ENCODE measurements at regions of chr15 and their contacts with region 1.

Region 1: DNA sequence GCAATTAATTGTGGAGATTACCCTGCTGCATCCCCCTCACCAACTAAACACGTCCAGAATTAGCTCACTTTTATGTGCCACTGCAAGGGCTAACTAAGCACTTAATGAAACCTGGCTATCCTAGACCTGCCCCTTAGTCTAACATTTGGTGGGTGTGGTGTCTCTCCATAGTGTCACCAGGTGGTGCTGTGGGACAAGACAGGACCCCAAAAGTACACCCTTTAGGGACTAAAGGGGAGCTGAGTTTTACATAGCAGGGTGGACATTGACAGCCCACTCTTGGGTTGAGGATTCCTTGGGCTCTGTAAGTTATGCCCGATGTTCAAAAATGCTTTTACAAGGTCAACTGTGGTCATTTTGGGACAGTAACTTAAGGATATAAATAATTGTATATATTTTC is 5.7 kb downstream of the DUT start:
- DNase-seq: peak; percentile 21
- H3K4me3 Mint-ChIP-seq: no peak overlapping the region
- H3K27ac Mint-ChIP-seq: no peak overlapping the region
- H3K4me1 Mint-ChIP-seq: peaks cover 18% of the 10 kb centered on the region
- H3K27me3 Mint-ChIP-seq: no peaks in the 10 kb centered on the region
- CTCF ChIP-seq: no peak

Region 2: DNA sequence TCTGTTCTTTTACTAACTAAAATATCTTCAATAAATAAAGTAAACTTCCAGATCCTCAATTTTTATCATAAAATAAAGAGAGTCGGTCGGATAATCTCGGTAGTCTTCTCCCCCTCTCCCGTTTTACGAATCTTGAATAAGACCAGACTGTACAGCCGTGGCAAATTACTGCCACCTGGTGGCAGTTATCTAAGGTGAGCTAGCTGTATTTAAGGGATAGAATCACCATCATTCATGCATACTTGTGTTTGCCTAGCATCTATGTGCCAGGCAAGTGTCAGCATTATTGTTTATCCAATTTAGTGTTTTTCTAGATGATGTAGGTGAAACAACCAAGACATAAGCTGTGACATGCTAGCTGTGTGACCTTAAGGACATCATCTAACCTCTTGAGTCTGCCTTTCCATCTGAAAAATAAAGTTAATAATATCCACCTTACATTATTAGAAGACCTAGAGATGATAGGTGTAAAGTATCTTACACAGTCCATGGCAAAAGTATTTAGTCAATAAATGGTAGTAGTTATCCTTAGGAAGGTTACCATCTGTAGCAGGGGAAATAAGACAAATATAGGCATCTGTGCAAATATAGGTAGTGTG is 15.6 kb after region 1 on chr15:
- CTCF ChIA-PET with region 1: interaction called, 27 read pairs
- POLR2A ChIA-PET with region 1: interaction called, 4 read pairs
- intact Hi-C with region 1: no loop called
- DNase-seq: peak; percentile 83
- H3K4me3 Mint-ChIP-seq: no peak overlapping the region
- H3K27ac Mint-ChIP-seq: no peak overlapping the region
- H3K4me1 Mint-ChIP-seq: peaks cover 11% of the 10 kb centered on the region
- H3K27me3 Mint-ChIP-seq: no peaks in the 10 kb centered on the region
- CTCF ChIP-seq: peak; percentile 73

Region 3: DNA sequence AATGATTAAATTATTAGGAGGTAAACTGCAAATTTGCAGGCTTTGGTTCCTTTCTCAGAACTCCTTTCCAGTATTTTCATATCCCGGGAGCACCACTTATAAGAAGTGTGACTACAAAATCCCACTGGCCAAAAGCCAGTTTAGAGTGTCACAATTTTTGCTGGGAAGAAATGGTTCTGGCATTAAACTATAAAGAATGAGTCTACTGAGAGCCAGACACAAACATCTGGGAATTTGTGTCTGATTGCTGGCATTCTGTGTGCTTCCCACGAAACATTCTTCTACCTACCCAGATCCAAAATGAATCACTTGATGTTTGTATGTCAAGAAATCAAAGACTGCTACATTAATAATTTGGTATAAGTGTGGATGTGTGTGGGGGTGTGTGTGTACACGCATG is 77.1 kb after region 1 on chr15:
- CTCF ChIA-PET with region 1: no interaction called
- POLR2A ChIA-PET with region 1: no interaction called
- intact Hi-C with region 1: no loop called
- DNase-seq: peak; percentile 71
- H3K4me3 Mint-ChIP-seq: no peak overlapping the region
- H3K27ac Mint-ChIP-seq: peak overlapping the region; percentile 19
- H3K4me1 Mint-ChIP-seq: peaks cover 12% of the 10 kb centered on the region
- H3K27me3 Mint-ChIP-seq: no peaks in the 10 kb centered on the region
- CTCF ChIP-seq: no peak

Measured in MCF 10A (cell line).